Psoas muscle (tissue), 8 donors: ENCODE measurements at regions of chr5 and their contacts with region 1.

Region 1: DNA sequence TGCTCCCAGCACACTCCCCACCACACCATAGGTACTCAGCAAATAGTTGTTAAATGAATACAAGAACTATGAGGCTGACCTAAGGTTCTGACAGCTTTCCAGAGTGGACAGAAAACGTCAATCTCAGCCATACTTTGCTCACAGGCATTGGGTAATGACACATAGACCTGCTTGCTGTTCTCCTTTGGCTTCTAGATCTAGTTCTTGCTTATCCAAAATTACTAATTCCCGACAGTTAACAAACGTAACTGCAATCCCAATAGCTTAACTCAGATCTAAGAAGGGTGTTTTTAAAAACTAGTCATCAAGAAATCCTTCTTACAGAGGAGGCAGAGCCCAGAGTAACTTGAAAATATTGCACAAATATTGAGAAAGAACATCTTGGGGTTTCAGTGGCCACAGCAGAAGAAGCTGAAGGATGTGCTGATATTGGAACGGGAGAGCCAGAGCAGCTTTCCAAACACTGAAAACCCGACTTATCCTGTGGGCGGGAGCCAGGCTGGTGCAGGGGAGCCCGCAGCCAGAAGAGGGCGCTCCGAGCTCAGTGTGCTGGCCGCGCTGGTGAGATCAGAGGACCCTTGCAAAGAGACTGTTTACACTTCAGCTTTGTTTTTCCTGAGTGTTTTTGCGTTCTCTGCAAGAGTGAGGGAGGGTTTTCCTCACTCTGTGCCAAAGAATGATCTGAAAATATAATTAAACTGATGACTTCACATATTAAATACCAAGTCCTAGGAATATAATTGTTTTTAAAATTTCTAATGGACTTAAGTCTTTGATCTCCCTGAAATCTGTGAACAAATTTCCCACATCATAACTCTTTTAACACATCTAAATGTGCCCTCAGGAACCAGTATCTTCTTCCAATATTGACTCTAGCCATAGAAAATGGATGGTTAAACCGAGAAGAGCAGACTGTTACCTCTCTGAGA is 30.3 kb downstream of the FGF1 start:
- DNase-seq: peak; percentile 84 to 91
- ATAC-seq: peak; percentile 91 to 98 (median 95)
- H3K4me3 ChIP-seq: no peak overlapping the region
- H3K27ac ChIP-seq: no peak overlapping the region
- H3K4me1 ChIP-seq: peaks cover 7% of the 10 kb centered on the region
- H3K27me3 ChIP-seq: no peaks in the 10 kb centered on the region
- CTCF ChIP-seq: peak; percentile 99

Region 2: DNA sequence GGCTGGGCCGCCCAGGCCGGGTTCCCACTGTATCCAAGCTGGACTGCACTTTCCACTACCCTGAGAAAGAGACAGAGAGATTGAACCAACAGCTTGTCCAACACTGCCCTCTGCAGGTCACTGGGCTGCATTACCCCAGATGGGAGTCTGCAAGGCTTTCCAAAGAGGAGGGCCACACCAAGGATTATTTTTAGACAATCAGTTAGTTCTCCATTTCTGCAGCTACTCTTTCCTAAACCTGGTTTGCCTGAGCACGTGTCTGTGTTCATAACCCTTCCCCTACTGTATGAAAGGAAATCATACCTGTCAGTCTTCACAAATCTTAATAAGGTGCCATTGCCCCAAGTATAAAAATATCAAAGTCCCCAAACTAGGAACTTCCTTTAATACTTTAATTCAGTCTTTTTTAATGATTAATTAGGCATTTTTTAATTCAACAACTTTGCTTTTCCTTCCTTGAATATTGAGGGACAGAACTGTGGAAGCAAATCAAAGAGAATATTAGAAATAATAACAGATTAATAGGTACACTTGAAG is 43.6 kb after region 1 on chr5:
- intact Hi-C with region 1: loop called (anchors 1 to 2 kb)
- DNase-seq: peak; percentile 85 to 92
- ATAC-seq: peak; percentile 86 to 91 (median 90)
- H3K4me3 ChIP-seq: no peak overlapping the region
- H3K27ac ChIP-seq: peak overlapping the region; percentile 80
- H3K4me1 ChIP-seq: peaks cover 25% of the 10 kb centered on the region
- H3K27me3 ChIP-seq: no peaks in the 10 kb centered on the region
- CTCF ChIP-seq: peak; percentile 99

Region 3: DNA sequence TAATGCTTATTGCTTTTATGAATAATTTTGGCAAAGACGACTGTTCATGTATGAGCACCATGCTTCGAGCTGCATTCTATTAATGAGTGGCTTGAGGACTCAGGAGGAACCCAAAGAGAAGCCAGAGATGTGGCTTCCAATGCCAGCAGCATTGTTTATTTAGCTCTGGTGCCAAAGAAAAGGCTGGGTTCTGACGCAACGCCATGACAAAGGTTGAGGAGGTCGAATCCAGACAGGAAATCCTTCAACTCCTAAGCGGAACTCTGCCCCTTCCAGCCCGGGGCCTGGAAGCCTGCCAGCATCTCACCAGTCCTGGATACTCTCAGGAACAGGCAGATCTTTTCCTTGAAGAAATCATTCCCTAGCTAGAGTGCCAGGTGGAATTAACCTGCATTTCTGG is 218.9 kb after region 1 on chr5:
- intact Hi-C with region 1: no loop called
- DNase-seq: peak; percentile 76 to 78
- ATAC-seq: peak in 2 of 4 donors; percentile 42 to 44
- H3K4me3 ChIP-seq: no peak overlapping the region
- H3K27ac ChIP-seq: no peak overlapping the region
- H3K4me1 ChIP-seq: peaks cover 12% of the 10 kb centered on the region
- H3K27me3 ChIP-seq: no peaks in the 10 kb centered on the region
- CTCF ChIP-seq: no peak